ENCODE measurements at regions of chr13 and their contacts with region 1.

Region 1: GRCh38 chr13:23921451-23921888 is 24.2 kb upstream of the C1QTNF9B start:
- DNase-seq: peak in 4 of 5 donors; percentile 23 to 39 (median 26)
- H3K4me3 ChIP-seq: no peak overlapping the region
- H3K4me3 Mint-ChIP-seq: no peak overlapping the region
- H3K27ac ChIP-seq: no peak overlapping the region
- H3K27ac Mint-ChIP-seq: no peak overlapping the region
- H3K4me1 ChIP-seq: no peaks in the 10 kb centered on the region
- H3K4me1 Mint-ChIP-seq: no peaks in the 10 kb centered on the region
- H3K27me3 ChIP-seq: no peaks in the 10 kb centered on the region
- H3K27me3 Mint-ChIP-seq: peaks cover 7 to 26% of the 10 kb centered on the region in 2 donors

Region 2: DNA sequence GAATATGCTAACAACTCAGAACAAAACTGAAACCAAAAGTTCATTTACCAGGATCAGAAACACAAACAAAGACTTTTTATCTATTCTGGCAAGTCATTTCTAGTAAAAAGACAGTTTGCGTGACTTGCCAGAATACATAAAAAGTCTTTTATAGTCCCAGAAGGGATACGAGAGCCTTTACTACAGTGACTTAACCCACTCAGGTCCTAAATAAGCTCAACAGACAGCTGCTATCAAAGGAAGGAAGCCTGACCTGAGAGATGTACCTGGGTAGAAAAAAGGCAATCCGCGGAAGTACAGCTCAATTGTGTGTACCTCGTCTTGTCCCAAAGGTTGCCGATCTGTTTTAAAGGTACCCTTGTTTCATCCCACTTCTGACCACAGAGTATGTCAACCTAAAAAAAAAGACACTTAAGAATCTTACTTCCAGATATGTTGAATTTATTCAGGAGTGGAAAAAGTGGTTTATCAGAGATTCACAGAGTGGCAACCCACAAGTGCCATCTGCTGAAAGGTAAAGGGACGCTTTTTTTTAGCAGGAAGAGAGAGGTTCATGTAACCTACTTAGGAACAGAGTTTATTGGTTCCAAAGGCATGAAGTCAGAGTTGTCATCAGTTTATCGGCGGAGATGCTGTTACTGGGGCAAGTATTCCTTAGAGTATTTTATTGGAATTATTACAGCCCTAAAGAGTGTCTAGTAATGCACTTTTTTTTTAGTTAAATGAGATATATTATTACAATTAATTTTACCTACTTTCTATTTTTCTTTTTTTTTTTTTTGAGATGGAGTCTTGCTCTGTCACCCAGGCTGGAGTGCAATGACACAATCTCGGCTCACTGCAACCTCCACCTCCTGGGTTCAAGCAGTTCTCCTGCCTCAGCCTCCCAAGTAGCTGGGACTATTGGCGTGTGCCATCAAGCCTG is 45.5 kb after region 1 on chr13:
- CTCF ChIA-PET with region 1: interaction called, 3 read pairs
- POLR2A ChIA-PET with region 1: no interaction called
- intact Hi-C with region 1: loop called (anchors 1 kb)
- DNase-seq: peak; percentile 49 to 63 (median 60)
- H3K4me3 ChIP-seq: peak overlapping the region; percentile 37 to 76
- H3K4me3 Mint-ChIP-seq: peak overlapping the region; percentile 74 to 93 (median 84)
- H3K27ac ChIP-seq: peak overlapping the region; percentile 68
- H3K27ac Mint-ChIP-seq: peak overlapping the region; percentile 80 to 97 (median 94)
- H3K4me1 ChIP-seq: peaks cover 10% of the 10 kb centered on the region
- H3K4me1 Mint-ChIP-seq: peaks cover 10 to 28% (median 18%) of the 10 kb centered on the region in 4 donors
- H3K27me3 ChIP-seq: no peaks in the 10 kb centered on the region
- H3K27me3 Mint-ChIP-seq: no peaks in the 10 kb centered on the region

Measured in CD4-positive, alpha-beta memory T cell (primary cell).